Lower leg skin (tissue), 4 donors: ENCODE measurements at regions of chr12 and their contacts with region 1.

Region 1: GRCh38 chr12:130041983-130042812 is 120.1 kb upstream of the FZD10 start:
- DNase-seq: peak; percentile 45 to 89
- H3K4me3 ChIP-seq: no peak overlapping the region
- CTCF ChIP-seq: no peak
- POLR2A ChIP-seq: no peak

Region 2: DNA sequence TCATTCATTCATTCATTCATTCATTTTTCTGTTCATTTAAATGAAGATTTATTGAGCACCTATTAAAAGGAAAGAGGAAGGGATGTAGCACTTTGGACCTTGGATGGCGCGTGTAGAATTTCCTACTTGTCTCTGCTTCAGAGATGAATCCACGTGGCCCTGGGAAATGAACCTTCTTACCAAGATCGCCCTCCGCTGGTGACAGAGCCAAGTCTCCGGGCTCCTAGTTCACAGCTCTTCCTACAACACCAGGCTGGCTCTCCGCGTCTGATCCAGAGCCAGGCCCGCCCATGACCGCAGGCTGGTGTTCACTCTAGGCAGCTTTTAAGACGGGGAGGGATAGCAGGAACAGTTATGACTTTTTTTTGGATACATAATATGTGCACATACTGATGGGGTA is 224.6 kb after region 1 on chr12:
- intact Hi-C with region 1: loop called (anchors 10 kb)
- DNase-seq: peak; percentile 34 to 85
- H3K4me3 ChIP-seq: no peak overlapping the region
- CTCF ChIP-seq: no peak
- POLR2A ChIP-seq: no peak

Region 3: DNA sequence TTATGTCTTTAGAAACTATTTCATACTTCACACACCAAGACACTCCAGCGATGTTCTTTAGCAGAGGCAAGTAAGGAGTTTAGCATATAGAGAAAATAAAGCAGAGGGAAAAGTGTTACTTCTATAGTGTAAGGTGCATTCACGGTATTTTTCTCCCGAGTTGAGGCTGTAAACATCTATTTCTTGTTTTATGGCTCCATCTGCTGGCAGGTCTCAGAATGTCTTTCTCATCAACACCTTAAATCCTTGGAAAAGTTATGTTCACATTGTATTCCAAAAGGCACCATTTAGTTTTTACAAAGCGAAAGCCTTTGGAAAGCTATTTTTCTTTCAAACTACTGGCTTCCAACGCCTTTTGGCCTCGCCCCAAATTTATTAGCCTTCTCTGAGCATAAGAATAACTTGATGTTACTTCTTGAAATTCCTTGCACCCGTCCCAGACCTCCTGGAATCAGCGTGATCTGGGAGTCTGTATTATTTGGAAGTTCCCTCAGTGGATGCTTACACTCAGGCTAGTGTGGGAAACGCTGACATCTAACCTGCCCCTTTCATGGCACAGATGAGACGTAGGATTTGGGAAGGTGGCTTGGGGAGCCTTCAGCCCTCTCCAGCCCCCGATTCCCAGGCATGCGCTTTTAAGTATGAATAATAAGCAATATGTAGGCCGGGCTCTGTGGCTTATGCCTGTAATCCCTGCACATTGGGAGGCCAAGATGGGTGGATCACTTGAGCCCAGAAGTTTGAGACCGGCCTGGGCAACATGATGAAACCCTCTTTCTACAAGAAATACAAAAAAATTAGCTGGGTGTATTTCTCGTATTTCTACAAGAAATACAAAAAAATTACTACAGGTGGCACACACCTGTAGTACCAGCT is 293.6 kb after region 1 on chr12:
- intact Hi-C with region 1: loop called (anchors 2 kb)
- DNase-seq: peak in 1 of 2 donors; percentile 59
- H3K4me3 ChIP-seq: no peak overlapping the region
- CTCF ChIP-seq: no peak
- POLR2A ChIP-seq: no peak